ENCODE measurements at regions of chr7 and their contacts with region 1.

Region 1: GRCh38 chr7:42940985-42941847 is 9.0 kb downstream of the MRPL32 start:
- DNase-seq: peak; percentile 43 to 70 (median 63)
- ATAC-seq: peak; percentile 87
- H3K4me3 ChIP-seq: no peak overlapping the region
- H3K4me3 Mint-ChIP-seq: no peak overlapping the region
- H3K27ac ChIP-seq: no peak overlapping the region
- H3K27ac Mint-ChIP-seq: no peak overlapping the region
- H3K4me1 ChIP-seq: peaks cover 0 to 3% of the 10 kb centered on the region in 2 donors
- H3K4me1 Mint-ChIP-seq: peaks cover 1 to 26% (median 9%) of the 10 kb centered on the region in 7 donors
- H3K27me3 ChIP-seq: no peaks in the 10 kb centered on the region
- H3K27me3 Mint-ChIP-seq: peaks cover 0 to 5% (median 0%) of the 10 kb centered on the region in 5 donors

Region 2: DNA sequence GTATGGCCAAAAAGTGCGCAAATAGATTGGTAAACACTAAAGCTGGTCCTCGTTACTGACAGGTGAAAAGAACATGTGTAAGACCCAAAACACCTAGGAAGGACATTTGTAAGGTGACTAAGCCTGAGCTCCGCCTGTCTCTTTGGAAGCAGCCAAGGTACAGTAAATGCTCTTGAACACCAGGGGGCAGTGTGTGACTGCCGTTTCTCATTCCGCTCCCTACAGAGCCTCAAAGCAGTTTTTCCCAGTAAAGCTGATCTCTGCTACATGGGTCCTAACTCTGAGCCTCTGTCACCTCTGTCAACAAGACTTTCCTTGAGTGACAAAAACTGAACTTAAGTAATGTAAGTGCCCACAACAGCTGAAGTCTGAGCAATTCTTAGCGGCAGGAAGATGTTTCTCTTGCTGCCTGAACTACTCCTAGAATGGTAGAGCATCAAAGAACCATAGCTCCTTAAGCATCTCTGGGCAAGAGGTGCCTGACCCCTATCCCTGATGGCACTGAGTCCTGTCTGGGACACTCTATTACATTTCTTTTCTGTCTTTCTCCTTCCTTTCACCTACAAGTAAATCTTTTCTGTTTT is 1000.4 kb before region 1 on chr7:
- CTCF ChIA-PET with region 1: no interaction called
- POLR2A ChIA-PET with region 1: no interaction called
- intact Hi-C with region 1: loop called in 1 of 2 experiments (anchors 5 kb)
- DNase-seq: peak in 8 of 9 donors; percentile 14 to 53 (median 36)
- ATAC-seq: peak; percentile 77
- H3K4me3 ChIP-seq: no peak overlapping the region
- H3K4me3 Mint-ChIP-seq: peak overlapping the region in 1 of 10 donors; percentile 23
- H3K27ac ChIP-seq: no peak overlapping the region
- H3K27ac Mint-ChIP-seq: no peak overlapping the region
- H3K4me1 ChIP-seq: no peaks in the 10 kb centered on the region
- H3K4me1 Mint-ChIP-seq: peaks cover 0 to 13% (median 7%) of the 10 kb centered on the region in 7 donors
- H3K27me3 ChIP-seq: no peaks in the 10 kb centered on the region
- H3K27me3 Mint-ChIP-seq: peaks cover 17 to 40% (median 23%) of the 10 kb centered on the region in 5 donors

Region 3: GRCh38 chr7:43260980-43261878 is 320.0 kb after region 1 on chr7:
- CTCF ChIA-PET with region 1: interaction called, 7 read pairs
- POLR2A ChIA-PET with region 1: no interaction called
- intact Hi-C with region 1: loop called in 1 of 2 experiments (anchors 1 kb)
- DNase-seq: peak; percentile 6 to 65 (median 38)
- ATAC-seq: peak; percentile 65
- H3K4me3 ChIP-seq: no peak overlapping the region
- H3K4me3 Mint-ChIP-seq: no peak overlapping the region
- H3K27ac ChIP-seq: no peak overlapping the region
- H3K27ac Mint-ChIP-seq: no peak overlapping the region
- H3K4me1 ChIP-seq: no peaks in the 10 kb centered on the region
- H3K4me1 Mint-ChIP-seq: no peaks in the 10 kb centered on the region
- H3K27me3 ChIP-seq: no peaks in the 10 kb centered on the region
- H3K27me3 Mint-ChIP-seq: peaks cover 0 to 18% (median 7%) of the 10 kb centered on the region in 5 donors

Region 4: DNA sequence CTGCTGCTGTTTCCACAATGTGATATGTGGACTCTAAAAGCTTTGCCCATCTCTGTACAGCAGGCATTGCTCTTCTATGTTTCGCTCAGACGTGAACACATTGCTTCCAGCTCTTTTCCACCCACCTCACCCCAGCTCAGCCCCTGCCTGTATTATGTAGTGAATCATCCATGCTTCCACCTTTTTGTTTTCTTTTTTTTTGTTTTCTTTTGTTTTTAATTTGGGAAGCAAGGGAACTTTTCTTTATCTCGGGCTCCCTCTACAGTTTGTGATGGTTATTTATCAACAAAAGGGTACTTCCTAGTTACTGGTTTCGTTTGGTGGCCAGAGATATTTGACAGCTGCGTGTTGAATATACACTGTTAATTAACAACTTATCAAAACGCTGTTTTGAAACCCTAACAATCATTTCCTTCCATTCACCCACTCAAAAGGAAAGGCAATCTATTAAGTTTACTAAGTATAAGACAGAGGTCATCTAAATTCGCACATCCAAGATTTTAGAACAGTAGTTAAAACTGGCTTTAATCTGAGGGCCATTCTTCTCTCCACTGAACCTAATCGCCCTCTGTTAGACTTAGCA is 513.8 kb after region 1 on chr7:
- CTCF ChIA-PET with region 1: no interaction called
- POLR2A ChIA-PET with region 1: no interaction called
- intact Hi-C with region 1: loop called in 1 of 2 experiments (anchors 5 kb)
- DNase-seq: peak in 1 of 9 donors; percentile 9
- ATAC-seq: peak; percentile 42
- H3K4me3 ChIP-seq: no peak overlapping the region
- H3K4me3 Mint-ChIP-seq: no peak overlapping the region
- H3K27ac ChIP-seq: no peak overlapping the region
- H3K27ac Mint-ChIP-seq: peak overlapping the region in 1 of 9 donors; percentile 20
- H3K4me1 ChIP-seq: no peaks in the 10 kb centered on the region
- H3K4me1 Mint-ChIP-seq: peaks cover 0 to 7% (median 4%) of the 10 kb centered on the region in 7 donors
- H3K27me3 ChIP-seq: no peaks in the 10 kb centered on the region
- H3K27me3 Mint-ChIP-seq: peaks cover 5 to 22% (median 7%) of the 10 kb centered on the region in 5 donors

Region 5: DNA sequence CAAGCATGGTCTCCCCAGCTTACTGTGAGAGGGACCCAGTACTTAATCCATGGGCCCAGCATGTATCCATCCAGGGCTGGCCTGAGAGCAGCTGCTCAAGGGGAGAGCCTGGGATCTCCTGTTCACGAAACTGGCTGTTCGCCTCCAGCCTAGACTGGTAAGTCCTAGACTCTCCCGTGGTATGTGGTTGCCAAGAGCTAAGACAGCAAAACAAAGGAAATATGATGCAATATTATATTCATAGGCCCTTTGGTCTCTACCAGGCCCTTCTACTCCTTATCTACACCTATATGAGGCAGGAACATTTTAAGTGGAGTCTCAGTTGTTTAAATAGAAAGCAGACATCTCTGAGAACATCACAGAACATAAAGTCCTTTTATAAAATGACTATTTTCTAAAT is 612.8 kb after region 1 on chr7:
- CTCF ChIA-PET with region 1: no interaction called
- POLR2A ChIA-PET with region 1: no interaction called
- intact Hi-C with region 1: no loop called
- DNase-seq: peak in 7 of 9 donors; percentile 12 to 37 (median 21)
- ATAC-seq: peak; percentile 78
- H3K4me3 ChIP-seq: no peak overlapping the region
- H3K4me3 Mint-ChIP-seq: peak overlapping the region; percentile 34 to 86 (median 68)
- H3K27ac ChIP-seq: peak overlapping the region; percentile 22
- H3K27ac Mint-ChIP-seq: peak overlapping the region; percentile 7 to 90 (median 53)
- H3K4me1 ChIP-seq: peaks cover 0 to 28% of the 10 kb centered on the region in 2 donors
- H3K4me1 Mint-ChIP-seq: peaks cover 20 to 57% (median 44%) of the 10 kb centered on the region in 7 donors
- H3K27me3 ChIP-seq: no peaks in the 10 kb centered on the region
- H3K27me3 Mint-ChIP-seq: peaks cover 0 to 10% (median 0%) of the 10 kb centered on the region in 5 donors

Region 6: GRCh38 chr7:43799589-43799988 is 858.4 kb after region 1 on chr7:
- CTCF ChIA-PET with region 1: no interaction called
- POLR2A ChIA-PET with region 1: no interaction called
- intact Hi-C with region 1: loop called in 1 of 2 experiments (anchors 5 kb)
- DNase-seq: no peak
- ATAC-seq: no peak
- H3K4me3 ChIP-seq: no peak overlapping the region
- H3K4me3 Mint-ChIP-seq: no peak overlapping the region
- H3K27ac ChIP-seq: no peak overlapping the region
- H3K27ac Mint-ChIP-seq: peak overlapping the region in 1 of 9 donors; percentile 65
- H3K4me1 ChIP-seq: no peaks in the 10 kb centered on the region
- H3K4me1 Mint-ChIP-seq: no peaks in the 10 kb centered on the region
- H3K27me3 ChIP-seq: no peaks in the 10 kb centered on the region
- H3K27me3 Mint-ChIP-seq: no peaks in the 10 kb centered on the region